BJ (cell line): ENCODE measurements at regions of chr13 and their contacts with region 1.

Region 1: GRCh38 chr13:95075501-95075900 is 225.8 kb downstream of the ABCC4 start:
- DNase-seq: no peak
- H3K4me3 ChIP-seq: no peak overlapping the region
- H3K27me3 ChIP-seq: no peaks in the 10 kb centered on the region
- CTCF ChIP-seq: no peak

Region 2: GRCh38 chr13:94928127-94928775 is 147.2 kb before region 1 on chr13:
- CTCF ChIA-PET with region 1: no interaction called
- POLR2A ChIA-PET with region 1: no interaction called
- DNase-seq: no peak
- H3K4me3 ChIP-seq: no peak overlapping the region
- H3K27me3 ChIP-seq: peaks cover 1% of the 10 kb centered on the region
- CTCF ChIP-seq: no peak

Region 3: GRCh38 chr13:95275322-95276036 is 200.0 kb after region 1 on chr13:
- CTCF ChIA-PET with region 1: no interaction called
- POLR2A ChIA-PET with region 1: interaction called, 11 read pairs
- DNase-seq: no peak
- H3K4me3 ChIP-seq: no peak overlapping the region
- H3K27me3 ChIP-seq: no peaks in the 10 kb centered on the region
- CTCF ChIP-seq: no peak